CD8-positive, alpha-beta T cell (primary cell): ENCODE measurements at regions of chr22 and their contacts with region 1.

Region 1: DNA sequence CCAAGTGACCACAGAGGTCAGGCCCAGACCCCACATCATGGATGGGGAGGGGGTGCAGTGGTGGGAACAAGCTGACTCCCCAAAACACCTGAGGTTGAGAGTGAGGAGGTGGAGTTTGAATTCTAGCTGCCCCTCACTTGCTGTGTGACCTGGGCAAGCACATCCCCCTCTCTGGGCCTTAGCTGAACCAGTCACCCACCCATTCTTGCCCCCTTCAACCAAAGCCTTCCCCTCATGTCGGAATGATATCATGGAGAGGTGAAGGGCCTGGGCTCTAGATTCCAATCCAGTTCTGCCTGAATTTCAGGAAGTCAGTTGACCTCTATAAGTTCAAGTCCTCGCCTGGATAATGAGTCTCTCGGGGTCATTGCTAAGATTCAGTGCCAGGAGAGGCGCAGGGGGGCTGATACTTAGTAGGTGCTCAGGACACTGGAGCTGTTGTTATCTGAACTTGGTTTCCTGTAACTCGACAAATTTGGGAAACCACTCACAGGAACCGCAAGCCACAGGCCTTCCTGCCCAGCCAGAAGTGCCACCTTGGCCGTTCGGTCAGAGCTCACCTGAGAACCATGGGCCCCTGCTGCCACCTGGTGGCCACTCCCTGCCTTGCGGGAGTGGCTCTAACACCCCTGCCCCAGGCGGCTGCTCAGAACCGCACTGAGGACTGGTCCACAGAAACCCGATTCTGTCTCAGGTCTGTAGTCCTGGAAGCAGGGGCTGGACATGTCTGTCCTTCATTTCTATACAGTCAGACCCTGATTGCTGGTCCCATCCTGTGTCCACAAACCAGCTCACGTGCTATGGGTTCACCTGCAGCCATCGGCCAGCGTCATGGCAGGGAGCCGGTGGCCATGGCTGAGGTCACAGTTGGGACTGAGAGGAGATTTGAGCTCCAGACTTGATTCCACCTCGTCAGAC is 6.9 kb downstream of the CDC42EP1 start:
- DNase-seq: peak; percentile 77 to 97 (median 92)
- ATAC-seq: peak; percentile 85
- H3K4me3 ChIP-seq: peak overlapping the region; percentile 9 to 10
- H3K4me3 Mint-ChIP-seq: peak overlapping the region; percentile 75
- H3K27ac ChIP-seq: no peak overlapping the region
- H3K27ac Mint-ChIP-seq: peak overlapping the region; percentile 66
- H3K4me1 ChIP-seq: peaks cover 24% of the 10 kb centered on the region
- H3K4me1 Mint-ChIP-seq: peaks cover 24% of the 10 kb centered on the region
- H3K27me3 ChIP-seq: peaks cover under 1 to 9% of the 10 kb centered on the region in 2 experiments
- H3K27me3 Mint-ChIP-seq: peaks cover 15% of the 10 kb centered on the region
- CTCF ChIP-seq: peak; percentile 93

Region 2: DNA sequence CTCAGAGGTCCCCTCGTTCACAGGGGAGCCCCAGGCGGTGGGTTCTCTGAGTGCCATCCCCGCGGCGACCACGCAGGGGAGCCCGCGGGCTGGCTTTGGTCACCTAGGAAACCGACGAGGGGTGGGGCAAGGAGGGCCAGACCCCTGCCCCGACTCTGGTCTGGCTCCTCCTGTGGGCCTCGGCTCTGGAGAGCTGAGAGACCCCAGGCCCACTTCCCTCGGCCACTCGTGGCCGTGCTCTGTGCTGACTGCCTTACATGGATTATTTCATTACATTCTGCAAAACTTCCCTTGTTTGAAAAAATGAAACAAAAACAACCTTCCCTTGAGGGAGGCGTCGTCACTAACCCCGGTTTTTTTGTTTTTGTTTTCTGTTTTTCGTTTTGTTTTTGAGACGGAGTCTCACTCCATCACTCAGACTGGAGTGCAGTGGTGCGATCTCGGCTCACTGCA is 300.0 kb before region 1 on chr22:
- CTCF ChIA-PET with region 1: interaction called, 4 read pairs
- POLR2A ChIA-PET with region 1: no interaction called
- intact Hi-C with region 1: loop called (anchors 1 to 10 kb)
- DNase-seq: peak; percentile 51 to 86 (median 71)
- ATAC-seq: peak; percentile 95
- H3K4me3 ChIP-seq: peak overlapping the region; percentile 66 to 83
- H3K4me3 Mint-ChIP-seq: peak overlapping the region; percentile 89
- H3K27ac ChIP-seq: peak overlapping the region; percentile 83 to 84
- H3K27ac Mint-ChIP-seq: peak overlapping the region; percentile 94
- H3K4me1 ChIP-seq: peaks cover 22% of the 10 kb centered on the region
- H3K4me1 Mint-ChIP-seq: peaks cover 24% of the 10 kb centered on the region
- H3K27me3 ChIP-seq: no peaks in the 10 kb centered on the region
- H3K27me3 Mint-ChIP-seq: no peaks in the 10 kb centered on the region
- CTCF ChIP-seq: peak; percentile 94

Region 3: DNA sequence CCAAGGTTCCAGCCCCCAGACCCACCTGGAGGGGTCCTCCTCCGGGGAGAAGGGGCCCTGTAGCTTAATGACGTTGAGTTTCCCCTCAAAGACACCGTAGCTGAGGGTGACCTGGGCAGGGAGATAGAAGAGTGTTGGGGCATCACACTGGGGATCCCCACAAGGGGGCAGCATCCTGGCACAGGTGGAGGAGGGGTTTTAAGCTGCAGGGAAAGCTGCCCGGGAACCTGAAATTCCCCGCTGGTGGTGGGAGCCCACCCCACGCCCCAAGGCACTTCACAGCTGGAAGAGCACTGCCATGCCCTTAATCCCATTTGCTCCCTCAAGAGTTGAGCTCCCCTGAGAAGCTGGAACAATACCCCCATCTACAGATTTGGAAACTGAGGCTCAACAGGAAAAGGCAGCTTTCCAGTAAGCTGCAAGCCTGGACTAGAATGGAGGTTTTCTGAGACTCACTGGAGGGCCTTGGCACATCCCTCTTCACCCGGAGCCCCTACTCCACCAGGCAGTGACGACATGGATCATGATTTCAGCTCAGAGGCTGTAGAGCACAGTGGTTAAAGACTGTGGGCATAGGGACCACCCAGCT is 94.7 kb before region 1 on chr22:
- CTCF ChIA-PET with region 1: interaction called, 32 read pairs
- POLR2A ChIA-PET with region 1: interaction called, 4 read pairs
- intact Hi-C with region 1: loop called in 1 of 2 experiments (anchors 5 kb)
- DNase-seq: peak in 8 of 9 experiments; percentile 19 to 71 (median 60)
- ATAC-seq: peak; percentile 44
- H3K4me3 ChIP-seq: no peak overlapping the region
- H3K4me3 Mint-ChIP-seq: no peak overlapping the region
- H3K27ac ChIP-seq: no peak overlapping the region
- H3K27ac Mint-ChIP-seq: peak overlapping the region; percentile 74
- H3K4me1 ChIP-seq: no peaks in the 10 kb centered on the region
- H3K4me1 Mint-ChIP-seq: peaks cover 11% of the 10 kb centered on the region
- H3K27me3 ChIP-seq: no peaks in the 10 kb centered on the region
- H3K27me3 Mint-ChIP-seq: no peaks in the 10 kb centered on the region
- CTCF ChIP-seq: peak; percentile 30

Region 4: GRCh38 chr22:37529652-37530345 is 37.4 kb before region 1 on chr22:
- CTCF ChIA-PET with region 1: interaction called, 16 read pairs
- POLR2A ChIA-PET with region 1: no interaction called
- intact Hi-C with region 1: no loop called
- DNase-seq: no peak
- ATAC-seq: no peak
- H3K4me3 ChIP-seq: no peak overlapping the region
- H3K4me3 Mint-ChIP-seq: no peak overlapping the region
- H3K27ac ChIP-seq: no peak overlapping the region
- H3K27ac Mint-ChIP-seq: no peak overlapping the region
- H3K4me1 ChIP-seq: peaks cover 7% of the 10 kb centered on the region
- H3K4me1 Mint-ChIP-seq: peaks cover 8% of the 10 kb centered on the region
- H3K27me3 ChIP-seq: no peaks in the 10 kb centered on the region
- H3K27me3 Mint-ChIP-seq: peaks cover 10% of the 10 kb centered on the region
- CTCF ChIP-seq: no peak

Region 5: DNA sequence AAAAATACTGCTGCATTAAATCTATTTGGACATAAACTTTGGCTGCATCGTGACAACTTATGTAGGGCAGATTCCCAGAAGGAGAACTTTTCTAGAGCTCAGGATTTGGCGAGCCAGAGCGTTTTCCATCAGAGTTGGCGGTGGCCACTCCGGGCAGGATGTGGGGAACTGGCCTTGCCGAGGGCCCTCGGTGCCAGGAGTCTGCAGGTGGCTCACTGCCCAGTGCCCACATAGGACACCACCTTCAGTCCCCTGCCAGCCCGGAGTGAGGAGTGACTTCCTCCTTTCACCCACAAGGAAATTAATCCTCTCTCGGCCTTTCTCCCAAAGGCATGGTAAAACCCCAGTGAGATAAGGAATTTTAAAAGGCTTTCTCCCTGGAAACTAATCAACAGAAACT is 14.3 kb after region 1 on chr22:
- CTCF ChIA-PET with region 1: interaction called, 15 read pairs
- POLR2A ChIA-PET with region 1: interaction called, 6 read pairs
- intact Hi-C with region 1: no loop called
- DNase-seq: no peak
- ATAC-seq: no peak
- H3K4me3 ChIP-seq: no peak overlapping the region
- H3K4me3 Mint-ChIP-seq: no peak overlapping the region
- H3K27ac ChIP-seq: no peak overlapping the region
- H3K27ac Mint-ChIP-seq: no peak overlapping the region
- H3K4me1 ChIP-seq: peaks cover 19% of the 10 kb centered on the region
- H3K4me1 Mint-ChIP-seq: peaks cover 13% of the 10 kb centered on the region
- H3K27me3 ChIP-seq: peaks cover 0 to 2% of the 10 kb centered on the region in 2 experiments
- H3K27me3 Mint-ChIP-seq: peaks cover 2% of the 10 kb centered on the region
- CTCF ChIP-seq: no peak

Region 6: GRCh38 chr22:37594237-37594636 is 27.1 kb after region 1 on chr22:
- CTCF ChIA-PET with region 1: interaction called, 101 read pairs
- POLR2A ChIA-PET with region 1: interaction called, 12 read pairs
- intact Hi-C with region 1: loop called (anchors 1 kb)
- DNase-seq: no peak
- ATAC-seq: no peak
- H3K4me3 ChIP-seq: no peak overlapping the region
- H3K4me3 Mint-ChIP-seq: no peak overlapping the region
- H3K27ac ChIP-seq: no peak overlapping the region
- H3K27ac Mint-ChIP-seq: no peak overlapping the region
- H3K4me1 ChIP-seq: peaks cover 6% of the 10 kb centered on the region
- H3K4me1 Mint-ChIP-seq: peaks cover 12% of the 10 kb centered on the region
- H3K27me3 ChIP-seq: no peaks in the 10 kb centered on the region
- H3K27me3 Mint-ChIP-seq: no peaks in the 10 kb centered on the region
- CTCF ChIP-seq: no peak

Region 7: DNA sequence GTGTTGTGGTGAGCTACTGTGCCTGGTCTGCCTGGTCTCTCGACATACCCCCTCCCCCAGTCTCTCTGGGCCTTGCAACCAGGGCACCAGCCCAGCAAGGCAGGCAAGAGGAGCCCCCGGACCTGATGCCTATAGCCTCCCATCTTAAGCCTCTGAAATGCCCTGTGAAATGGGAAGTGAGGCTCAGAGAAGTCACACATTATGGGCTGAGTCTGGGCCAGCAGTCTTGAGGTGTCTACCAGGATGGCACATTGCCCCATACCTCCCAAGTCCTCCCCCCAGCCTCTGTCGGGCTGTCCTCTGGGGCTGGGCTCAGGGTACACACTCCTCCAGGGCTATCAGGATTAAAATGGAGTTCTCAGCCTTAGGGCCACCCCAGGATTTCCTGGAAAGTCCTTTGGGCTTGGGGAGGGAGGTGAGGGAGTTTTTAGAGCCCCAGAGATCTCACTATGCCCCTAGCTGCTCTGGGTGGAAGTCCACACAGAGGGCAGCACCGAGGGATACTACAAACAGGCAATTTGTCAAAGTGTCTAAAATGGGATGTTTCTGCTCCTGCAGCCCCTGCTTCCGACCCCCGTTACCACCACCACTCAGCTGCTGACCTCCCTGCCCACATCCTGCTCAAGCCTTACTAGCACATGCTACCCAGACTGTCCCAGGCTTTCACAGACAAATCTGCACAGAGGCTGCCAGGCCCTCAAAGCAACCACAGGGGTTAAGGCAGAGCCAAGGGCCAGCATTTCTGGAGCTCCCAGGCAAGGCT is 69.2 kb after region 1 on chr22:
- CTCF ChIA-PET with region 1: no interaction called
- POLR2A ChIA-PET with region 1: no interaction called
- intact Hi-C with region 1: no loop called
- DNase-seq: peak in 2 of 9 experiments; percentile 50 to 61
- ATAC-seq: no peak
- H3K4me3 ChIP-seq: no peak overlapping the region
- H3K4me3 Mint-ChIP-seq: peak overlapping the region; percentile 59
- H3K27ac ChIP-seq: peak overlapping the region in 1 of 2 experiments; percentile 79
- H3K27ac Mint-ChIP-seq: peak overlapping the region; percentile 89
- H3K4me1 ChIP-seq: peaks cover 81% of the 10 kb centered on the region
- H3K4me1 Mint-ChIP-seq: peaks cover 77% of the 10 kb centered on the region
- H3K27me3 ChIP-seq: no peaks in the 10 kb centered on the region
- H3K27me3 Mint-ChIP-seq: no peaks in the 10 kb centered on the region
- CTCF ChIP-seq: no peak

Region 8: DNA sequence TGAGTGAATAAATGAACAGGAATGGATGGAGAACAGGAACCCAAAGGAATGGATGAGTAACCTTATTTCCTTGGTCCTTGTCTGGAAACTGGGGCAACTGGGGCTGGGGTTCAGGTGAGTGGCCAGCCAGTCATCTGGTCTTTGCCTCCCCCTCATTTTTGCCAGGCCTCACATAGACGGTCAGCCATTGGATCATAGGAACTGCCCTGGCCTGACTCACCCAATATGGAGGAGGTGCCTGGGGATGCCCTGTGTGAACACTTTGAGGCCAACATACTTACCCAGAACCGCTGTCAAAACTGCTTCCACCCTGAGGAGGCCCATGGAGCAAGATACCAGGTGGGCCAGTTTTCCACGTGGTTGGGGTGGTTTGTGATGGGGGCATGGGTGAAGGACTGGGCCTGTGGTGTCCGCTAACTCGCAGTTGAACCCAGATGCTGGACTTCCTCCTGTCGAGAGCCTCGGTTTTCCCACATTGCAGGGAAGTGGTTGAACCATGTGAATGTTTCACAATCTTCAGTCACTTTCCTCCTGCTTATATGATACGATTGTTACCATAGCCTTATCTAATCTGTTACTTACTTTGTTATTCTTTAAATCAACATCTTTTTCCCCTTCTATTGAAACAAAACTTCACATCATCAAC is 134.1 kb after region 1 on chr22:
- CTCF ChIA-PET with region 1: no interaction called
- POLR2A ChIA-PET with region 1: no interaction called
- intact Hi-C with region 1: no loop called
- DNase-seq: peak in 1 of 9 experiments; percentile 13
- ATAC-seq: no peak
- H3K4me3 ChIP-seq: no peak overlapping the region
- H3K4me3 Mint-ChIP-seq: no peak overlapping the region
- H3K27ac ChIP-seq: no peak overlapping the region
- H3K27ac Mint-ChIP-seq: no peak overlapping the region
- H3K4me1 ChIP-seq: peaks cover 3% of the 10 kb centered on the region
- H3K4me1 Mint-ChIP-seq: peaks cover 8% of the 10 kb centered on the region
- H3K27me3 ChIP-seq: no peaks in the 10 kb centered on the region
- H3K27me3 Mint-ChIP-seq: no peaks in the 10 kb centered on the region
- CTCF ChIP-seq: no peak

Region 9: DNA sequence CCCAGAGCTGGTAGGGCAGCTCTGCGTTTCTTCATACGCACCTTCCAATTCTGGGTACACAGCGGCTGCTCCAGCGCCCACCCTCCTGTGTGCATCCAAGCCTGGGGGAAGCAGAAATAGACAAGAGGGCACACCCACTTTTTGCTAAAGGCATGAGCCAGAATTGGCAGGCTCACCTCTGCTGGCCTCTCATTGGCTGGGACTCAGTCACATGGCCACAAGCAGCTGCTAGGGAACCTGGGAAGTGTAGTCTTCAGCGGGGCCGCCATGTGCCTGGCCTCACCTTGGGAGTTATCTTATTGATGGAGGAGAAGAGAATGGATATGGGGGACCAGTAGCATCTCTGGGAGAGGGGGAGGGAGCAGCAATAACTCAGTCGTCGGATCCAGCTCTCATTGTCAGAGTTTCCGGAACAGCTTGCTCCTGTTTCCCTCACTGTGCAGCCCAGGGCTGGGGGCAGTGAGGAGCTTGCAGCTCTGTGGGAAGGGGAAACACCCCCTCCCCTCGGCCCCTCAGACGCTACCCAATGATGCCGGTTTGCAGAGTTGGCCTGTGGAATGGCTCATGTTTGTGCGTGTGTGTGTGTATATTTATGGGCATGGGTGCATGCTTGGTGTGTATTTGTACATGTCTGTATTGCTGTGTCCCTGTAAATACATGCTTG is 1923.1 kb after region 1 on chr22:
- CTCF ChIA-PET with region 1: no interaction called
- POLR2A ChIA-PET with region 1: no interaction called
- intact Hi-C with region 1: no loop called
- DNase-seq: peak; percentile 58 to 89 (median 76)
- ATAC-seq: peak; percentile 99
- H3K4me3 ChIP-seq: no peak overlapping the region
- H3K4me3 Mint-ChIP-seq: peak overlapping the region; percentile 69
- H3K27ac ChIP-seq: no peak overlapping the region
- H3K27ac Mint-ChIP-seq: peak overlapping the region; percentile 67
- H3K4me1 ChIP-seq: peaks cover 7% of the 10 kb centered on the region
- H3K4me1 Mint-ChIP-seq: peaks cover 12% of the 10 kb centered on the region
- H3K27me3 ChIP-seq: no peaks in the 10 kb centered on the region
- H3K27me3 Mint-ChIP-seq: no peaks in the 10 kb centered on the region
- CTCF ChIP-seq: no peak